Endothelial cell of umbilical vein (primary cell): ENCODE measurements at regions of chr16 and their contacts with region 1.

Region 1: GRCh38 chr16:3305109-3306068 is at the starts of genes TIGD7 and ZNF75A:
- DNase-seq: peak; percentile 92
- H3K4me3 ChIP-seq: peak within 1 kb of the TSS; percentile 46 to 81 (median 65)
- H3K27ac ChIP-seq: peak within 1 kb of the TSS; percentile 86
- H3K4me1 ChIP-seq: peaks cover 12% of the 10 kb centered on the region
- H3K27me3 ChIP-seq: no peaks in the 10 kb centered on the region
- CTCF ChIP-seq: peak in 1 of 2 donors; percentile 5
- POLR2A ChIP-seq: peak; percentile 97
- total RNA-seq, gene TIGD7: 3.3 and 3.5 TPM in 2 replicates
- total RNA-seq, gene ZNF75A: 28.0 and 28.4 TPM in 2 replicates

Region 2: GRCh38 chr16:3282730-3283524 is 22.5 kb before region 1 on chr16 and contains the start of gene ZNF263:
- CTCF ChIA-PET with region 1: interaction called, 3 read pairs
- POLR2A ChIA-PET with region 1: interaction called, 4 read pairs
- dilution Hi-C with region 1: no loop called
- intact Hi-C with region 1: loop called (anchors 1 kb)
- DNase-seq: peak; percentile 98
- H3K4me3 ChIP-seq: peak within 1 kb of the TSS; percentile 74 to 79 (median 77)
- H3K27ac ChIP-seq: peak within 1 kb of the TSS; percentile 92
- H3K4me1 ChIP-seq: peaks cover 13% of the 10 kb centered on the region
- H3K27me3 ChIP-seq: peaks cover 2 to 6% of the 10 kb centered on the region in 2 experiments
- CTCF ChIP-seq: no peak
- POLR2A ChIP-seq: peak; percentile 75
- total RNA-seq, gene ZNF263: 20.8 and 22.7 TPM in 2 replicates